Panc1 (cell line): ENCODE measurements at regions of chr2 and their contacts with region 1.

Region 1: GRCh38 chr2:27249891-27250651 is 12.8 kb downstream of the SLC30A3 start:
- DNase-seq: no peak
- ATAC-seq: peak; percentile 67
- H3K4me3 ChIP-seq: no peak overlapping the region
- H3K27ac ChIP-seq: no peak overlapping the region
- H3K4me1 ChIP-seq: peaks cover 6% of the 10 kb centered on the region
- H3K27me3 ChIP-seq: no peaks in the 10 kb centered on the region
- CTCF ChIP-seq: no peak; the same call in 1 of the 2 replicates

Region 2: DNA sequence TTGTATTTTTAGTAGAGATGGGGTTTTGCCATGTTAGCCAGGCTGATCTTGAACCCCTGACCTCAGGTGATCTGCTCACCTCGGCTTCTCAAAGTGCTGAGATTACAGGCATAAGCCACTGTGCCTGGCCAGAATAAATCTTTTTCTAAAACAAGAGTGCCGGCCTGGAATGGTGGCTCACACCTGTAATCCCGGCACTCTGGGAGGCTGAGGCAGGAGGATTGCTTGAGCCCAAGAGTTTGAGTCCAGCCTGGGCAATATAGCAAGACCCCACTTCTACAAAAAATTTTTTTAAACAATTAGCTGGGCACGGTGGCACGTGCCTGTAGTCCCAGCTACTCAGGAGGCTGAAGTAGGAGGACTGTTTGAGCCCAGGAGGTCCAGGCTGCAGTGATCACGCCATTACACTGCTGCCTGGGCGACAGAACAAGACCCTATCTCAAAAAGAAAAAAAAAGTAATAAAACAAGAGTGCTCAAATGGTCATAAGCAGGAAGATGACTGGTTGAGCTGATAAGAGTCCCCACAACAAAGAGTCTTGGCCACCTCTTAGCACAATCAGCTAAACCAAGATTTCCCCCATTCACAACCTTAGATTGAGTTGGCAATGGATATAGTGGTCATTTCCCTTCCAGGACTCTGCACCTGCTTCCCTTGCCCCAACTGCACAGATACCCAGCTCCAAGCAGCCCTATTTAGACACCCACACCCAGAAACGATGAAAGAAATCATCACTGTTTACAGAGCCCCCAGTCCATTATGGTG is 64.0 kb after region 1 on chr2:
- CTCF ChIA-PET with region 1: no interaction called
- POLR2A ChIA-PET with region 1: interaction called, 12 read pairs
- in situ Hi-C with region 1: no loop called
- intact Hi-C with region 1: no loop called
- DNase-seq: no peak
- ATAC-seq: no peak
- H3K4me3 ChIP-seq: no peak overlapping the region
- H3K27ac ChIP-seq: no peak overlapping the region
- H3K4me1 ChIP-seq: no peaks in the 10 kb centered on the region
- H3K27me3 ChIP-seq: no peaks in the 10 kb centered on the region
- CTCF ChIP-seq: no peak